Naive thymus-derived CD4-positive, alpha-beta T cell (primary cell): ENCODE measurements at regions of chr7 and their contacts with region 1.

Region 1: GRCh38 chr7:52586704-52587103 is 448.7 kb upstream of the POM121L12 start:
- DNase-seq: no peak
- ATAC-seq: no peak
- H3K4me3 ChIP-seq: no peak overlapping the region
- H3K4me3 Mint-ChIP-seq: no peak overlapping the region
- H3K27ac ChIP-seq: no peak overlapping the region
- H3K27ac Mint-ChIP-seq: no peak overlapping the region
- H3K4me1 ChIP-seq: no peaks in the 10 kb centered on the region
- H3K4me1 Mint-ChIP-seq: no peaks in the 10 kb centered on the region
- H3K27me3 ChIP-seq: no peaks in the 10 kb centered on the region
- H3K27me3 Mint-ChIP-seq: no peaks in the 10 kb centered on the region

Region 2: DNA sequence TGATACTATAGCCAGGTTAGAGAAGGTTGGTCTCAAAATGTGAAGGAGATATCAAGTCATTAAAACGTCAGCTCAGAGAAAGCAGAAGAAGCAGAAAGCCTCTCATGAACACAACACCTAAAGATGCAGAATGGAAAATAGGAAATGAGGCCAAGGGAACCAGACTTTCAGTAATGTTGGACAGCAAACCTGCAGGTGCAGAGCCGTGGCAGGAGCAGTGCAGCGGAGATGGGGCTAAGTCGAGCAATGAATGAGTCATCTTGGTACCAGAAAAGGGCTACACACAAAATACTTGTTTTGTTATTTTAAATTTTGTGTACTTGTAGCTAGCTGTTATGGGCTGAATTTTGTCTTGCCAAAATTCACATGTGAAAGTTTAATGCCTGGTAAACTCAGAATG is 30.9 kb before region 1 on chr7:
- CTCF ChIA-PET with region 1: no interaction called
- POLR2A ChIA-PET with region 1: no interaction called
- intact Hi-C with region 1: no loop called
- DNase-seq: no peak
- ATAC-seq: no peak
- H3K4me3 ChIP-seq: no peak overlapping the region
- H3K4me3 Mint-ChIP-seq: no peak overlapping the region
- H3K27ac ChIP-seq: no peak overlapping the region
- H3K27ac Mint-ChIP-seq: no peak overlapping the region
- H3K4me1 ChIP-seq: no peaks in the 10 kb centered on the region
- H3K4me1 Mint-ChIP-seq: no peaks in the 10 kb centered on the region
- H3K27me3 ChIP-seq: no peaks in the 10 kb centered on the region
- H3K27me3 Mint-ChIP-seq: no peaks in the 10 kb centered on the region

Region 3: DNA sequence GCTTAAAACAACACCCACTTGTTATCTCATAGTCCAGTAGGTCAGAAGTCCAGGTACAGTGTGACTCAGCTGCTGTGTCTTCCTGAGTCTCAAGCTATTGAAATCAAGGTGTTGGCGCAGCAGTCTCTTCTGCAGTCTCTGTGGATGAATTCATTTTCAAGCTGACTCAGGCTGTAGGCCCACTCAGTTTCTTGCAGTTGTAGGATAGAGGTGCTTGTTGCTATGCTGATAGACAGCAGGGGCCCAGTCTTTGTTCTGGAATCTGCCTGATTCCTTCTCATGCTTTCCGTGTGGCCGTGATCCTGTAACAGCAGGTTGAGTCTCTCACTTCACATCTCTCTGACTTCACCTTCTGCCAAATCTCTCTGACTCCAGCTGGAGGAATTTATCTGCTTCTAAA is 48.3 kb after region 1 on chr7:
- CTCF ChIA-PET with region 1: no interaction called
- POLR2A ChIA-PET with region 1: no interaction called
- intact Hi-C with region 1: loop called in 1 of 2 experiments (anchors 5 kb)
- DNase-seq: no peak
- ATAC-seq: no peak
- H3K4me3 ChIP-seq: no peak overlapping the region
- H3K4me3 Mint-ChIP-seq: no peak overlapping the region
- H3K27ac ChIP-seq: no peak overlapping the region
- H3K27ac Mint-ChIP-seq: no peak overlapping the region
- H3K4me1 ChIP-seq: no peaks in the 10 kb centered on the region
- H3K4me1 Mint-ChIP-seq: no peaks in the 10 kb centered on the region
- H3K27me3 ChIP-seq: no peaks in the 10 kb centered on the region
- H3K27me3 Mint-ChIP-seq: no peaks in the 10 kb centered on the region